Breast epithelium (tissue), 4 donors: ENCODE measurements at regions of chr15 and their contacts with region 1.

Region 1: GRCh38 chr15:95734422-95735316 is 595.8 kb upstream of the NR2F2 start:
- DNase-seq: no peak
- H3K4me3 ChIP-seq: no peak overlapping the region
- H3K27ac ChIP-seq: no peak overlapping the region
- H3K4me1 ChIP-seq: no peaks in the 10 kb centered on the region
- H3K27me3 ChIP-seq: no peaks in the 10 kb centered on the region
- CTCF ChIP-seq: no peak
- POLR2A ChIP-seq: no peak

Region 2: DNA sequence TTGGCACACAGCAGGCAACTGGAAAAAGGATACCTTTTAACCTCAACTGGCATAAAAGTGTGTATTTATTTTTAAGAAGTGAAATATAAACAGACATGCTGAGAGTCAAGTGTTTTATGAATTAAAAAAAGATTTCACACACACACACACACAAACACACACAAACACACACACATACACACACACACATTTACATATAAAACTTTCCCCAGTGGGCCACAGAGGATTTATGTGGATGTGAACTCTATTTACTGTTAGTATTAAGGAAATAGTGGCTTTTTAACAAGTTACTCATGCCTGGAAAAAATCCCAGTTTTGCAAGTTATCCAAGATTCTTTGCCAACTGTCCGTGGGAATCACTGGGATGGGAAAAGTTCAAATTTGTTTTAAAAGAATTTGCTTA is 130.0 kb before region 1 on chr15:
- intact Hi-C with region 1: no loop called
- DNase-seq: no peak
- H3K4me3 ChIP-seq: no peak overlapping the region
- H3K27ac ChIP-seq: peak overlapping the region in 1 of 2 donors; percentile 69
- H3K4me1 ChIP-seq: no peaks in the 10 kb centered on the region
- H3K27me3 ChIP-seq: no peaks in the 10 kb centered on the region
- CTCF ChIP-seq: no peak
- POLR2A ChIP-seq: no peak

Region 3: DNA sequence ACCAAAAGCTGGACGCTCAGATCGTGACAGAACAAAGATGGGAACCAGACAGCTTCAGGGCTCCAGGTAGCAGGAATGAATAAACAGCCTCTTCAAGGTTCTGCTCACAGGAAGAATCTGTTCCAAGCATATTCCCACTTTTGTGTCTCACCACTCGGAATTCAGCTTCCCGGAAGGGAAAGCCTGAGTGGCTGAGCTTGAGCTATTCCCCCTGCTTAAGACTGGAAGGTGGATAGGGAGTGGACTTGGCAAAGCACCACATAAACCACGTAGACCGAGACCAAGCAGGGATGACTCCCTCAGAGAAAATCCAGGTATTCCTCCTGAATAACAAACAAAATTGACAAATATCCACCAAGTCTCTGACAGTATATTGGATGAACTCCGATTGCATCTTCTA is 415.6 kb after region 1 on chr15:
- intact Hi-C with region 1: loop called (anchors 5 kb)
- DNase-seq: no peak
- H3K4me3 ChIP-seq: no peak overlapping the region
- H3K27ac ChIP-seq: no peak overlapping the region
- H3K4me1 ChIP-seq: no peaks in the 10 kb centered on the region
- H3K27me3 ChIP-seq: no peaks in the 10 kb centered on the region
- CTCF ChIP-seq: no peak
- POLR2A ChIP-seq: no peak

Region 4: DNA sequence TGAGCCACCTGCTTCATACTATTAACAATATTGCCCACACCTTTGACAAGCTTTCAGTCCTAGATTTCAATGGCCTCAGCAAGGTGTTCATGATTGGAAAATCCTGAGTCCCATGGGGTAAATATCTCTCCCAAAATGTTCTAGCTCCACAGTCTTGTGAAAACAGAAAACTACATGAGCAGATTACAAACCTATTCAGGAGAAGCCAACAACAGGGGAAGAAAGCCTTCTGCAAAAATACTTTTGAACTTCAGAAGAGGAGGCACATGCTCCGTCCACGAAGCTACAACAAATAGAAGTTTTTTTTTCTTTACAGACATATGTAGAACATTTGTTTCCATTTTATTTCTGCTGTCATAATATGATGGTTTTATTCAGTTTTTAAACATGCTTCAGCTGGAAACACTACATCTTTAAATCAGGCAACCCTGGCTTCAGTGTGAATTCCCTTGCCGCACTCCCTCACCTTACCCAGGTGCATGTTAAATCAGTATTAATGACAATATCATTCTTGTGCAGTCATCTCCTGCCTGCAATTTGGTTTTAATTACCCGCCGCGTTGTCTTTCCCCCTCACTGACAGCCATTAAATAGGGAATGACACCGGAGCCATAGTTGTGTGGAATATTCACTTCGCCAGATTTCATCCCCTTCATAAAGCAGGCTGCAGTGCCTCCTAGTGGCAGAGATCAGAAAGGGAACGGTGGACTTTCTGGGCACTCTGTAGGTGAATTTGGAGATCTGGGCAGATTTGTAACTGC is 1500.4 kb after region 1 on chr15:
- intact Hi-C with region 1: no loop called
- DNase-seq: no peak
- H3K4me3 ChIP-seq: peak overlapping the region in 1 of 3 donors; percentile 7
- H3K27ac ChIP-seq: no peak overlapping the region
- H3K4me1 ChIP-seq: no peaks in the 10 kb centered on the region
- H3K27me3 ChIP-seq: peaks cover 0 to 8% of the 10 kb centered on the region in 2 donors
- CTCF ChIP-seq: peak; percentile 63 to 82 (median 77)
- POLR2A ChIP-seq: no peak